ENCODE measurements at regions of chrX and their contacts with region 1.

Region 1: DNA sequence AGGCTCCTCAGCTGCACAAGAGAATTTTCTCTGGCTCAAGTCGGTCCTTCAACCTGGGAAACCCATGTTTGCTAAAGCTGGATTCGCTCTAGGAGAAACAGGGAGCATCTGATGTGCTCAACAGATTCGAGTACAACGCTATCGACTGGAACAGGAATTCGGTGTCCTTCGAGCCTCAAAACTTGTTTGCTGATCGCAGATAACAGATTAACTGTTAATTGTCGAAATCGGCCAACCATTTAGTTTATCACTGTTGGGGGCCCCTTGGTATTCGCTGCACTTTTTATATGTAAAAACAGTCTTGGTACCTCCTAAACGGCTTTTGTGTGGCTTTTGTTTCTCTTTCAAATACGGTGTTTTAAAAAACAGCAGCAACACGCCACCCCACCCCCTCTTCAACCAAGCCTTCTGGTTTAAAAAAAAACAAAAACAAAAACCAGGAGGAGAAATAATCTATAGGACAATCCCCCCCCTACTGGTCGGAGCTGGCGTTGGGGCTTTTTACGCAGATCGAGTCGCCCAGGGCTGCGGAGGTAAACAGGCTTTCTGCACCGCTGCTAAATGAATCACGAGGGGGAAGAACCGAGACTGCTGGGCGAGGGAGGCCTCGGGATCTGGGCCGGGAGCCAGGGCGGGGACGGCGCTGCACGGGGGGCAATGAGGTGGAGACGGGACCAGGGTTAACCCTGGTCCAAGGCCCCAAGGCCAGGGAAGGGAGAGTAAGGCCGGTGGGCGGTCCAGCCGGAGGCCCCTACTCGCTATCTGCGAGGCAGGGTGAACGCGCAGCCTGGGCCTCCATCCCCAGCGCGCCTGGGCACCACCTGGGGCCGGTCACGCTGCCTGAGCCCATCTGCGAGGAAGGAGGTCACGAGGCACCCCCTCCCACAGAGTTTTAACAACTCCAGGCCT is 71.7 kb upstream of the BCOR start:
- DNase-seq: peak; percentile 88
- H3K4me3 Mint-ChIP-seq: peak overlapping the region; percentile 83
- H3K27ac Mint-ChIP-seq: peak overlapping the region; percentile 97
- H3K4me1 Mint-ChIP-seq: peaks cover 55% of the 10 kb centered on the region
- H3K27me3 Mint-ChIP-seq: no peaks in the 10 kb centered on the region

Region 2: GRCh38 chrX:39815631-39816030 is 353.8 kb before region 1 on chrX:
- CTCF ChIA-PET with region 1: interaction called, 3 read pairs
- POLR2A ChIA-PET with region 1: interaction called, 17 read pairs
- DNase-seq: no peak
- H3K4me3 Mint-ChIP-seq: no peak overlapping the region
- H3K27ac Mint-ChIP-seq: no peak overlapping the region
- H3K4me1 Mint-ChIP-seq: peaks cover 30% of the 10 kb centered on the region
- H3K27me3 Mint-ChIP-seq: peaks cover 10% of the 10 kb centered on the region

Region 3: DNA sequence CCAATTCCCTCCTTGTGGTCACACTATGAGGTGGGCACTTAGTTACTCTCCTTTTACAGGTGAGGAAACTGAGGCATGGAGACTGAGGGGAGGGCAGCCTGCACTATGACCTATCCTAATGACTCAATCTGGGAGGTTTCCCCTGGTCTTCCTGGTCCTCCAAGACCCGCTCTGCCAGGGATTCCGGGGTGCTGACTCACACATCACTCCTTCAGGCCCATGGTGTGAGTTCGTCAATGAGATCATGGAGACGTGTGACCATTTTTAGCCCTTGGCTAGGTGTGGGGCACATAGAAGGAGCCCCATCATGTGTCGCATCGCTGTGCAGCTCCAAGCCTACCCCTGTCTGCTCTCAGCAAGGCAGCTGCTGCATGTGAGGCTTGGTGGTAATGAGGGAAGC is 39.2 kb before region 1 on chrX:
- CTCF ChIA-PET with region 1: no interaction called
- POLR2A ChIA-PET with region 1: no interaction called
- DNase-seq: no peak
- H3K4me3 Mint-ChIP-seq: no peak overlapping the region
- H3K27ac Mint-ChIP-seq: no peak overlapping the region
- H3K4me1 Mint-ChIP-seq: peaks cover 9% of the 10 kb centered on the region
- H3K27me3 Mint-ChIP-seq: no peaks in the 10 kb centered on the region